Transverse colon (tissue), 4 donors: ENCODE measurements at regions of chr5 and their contacts with region 1.

Region 1: GRCh38 chr5:139844472-139845145 is 49.0 kb downstream of the PSD2 start:
- DNase-seq: peak; percentile 74
- H3K4me3 ChIP-seq: no peak overlapping the region
- H3K27ac ChIP-seq: no peak overlapping the region
- H3K4me1 ChIP-seq: peaks cover 4 to 10% (median 8%) of the 10 kb centered on the region in 4 donors
- H3K27me3 ChIP-seq: peaks cover 43% of the 10 kb centered on the region
- CTCF ChIP-seq: peak; percentile 52 to 59 (median 58)
- EP300 ChIP-seq: no peak
- POLR2A ChIP-seq: no peak

Region 2: GRCh38 chr5:139812836-139813805 is 31.5 kb before region 1 on chr5:
- in situ Hi-C with region 1: no loop called
- intact Hi-C with region 1: loop called (anchors 2 kb)
- DNase-seq: no peak
- H3K4me3 ChIP-seq: no peak overlapping the region
- H3K27ac ChIP-seq: no peak overlapping the region
- H3K4me1 ChIP-seq: no peaks in the 10 kb centered on the region
- H3K27me3 ChIP-seq: peaks cover 9% of the 10 kb centered on the region
- CTCF ChIP-seq: no peak
- EP300 ChIP-seq: no peak
- POLR2A ChIP-seq: no peak